ENCODE measurements at regions of chr14 and their contacts with region 1.

Region 1: DNA sequence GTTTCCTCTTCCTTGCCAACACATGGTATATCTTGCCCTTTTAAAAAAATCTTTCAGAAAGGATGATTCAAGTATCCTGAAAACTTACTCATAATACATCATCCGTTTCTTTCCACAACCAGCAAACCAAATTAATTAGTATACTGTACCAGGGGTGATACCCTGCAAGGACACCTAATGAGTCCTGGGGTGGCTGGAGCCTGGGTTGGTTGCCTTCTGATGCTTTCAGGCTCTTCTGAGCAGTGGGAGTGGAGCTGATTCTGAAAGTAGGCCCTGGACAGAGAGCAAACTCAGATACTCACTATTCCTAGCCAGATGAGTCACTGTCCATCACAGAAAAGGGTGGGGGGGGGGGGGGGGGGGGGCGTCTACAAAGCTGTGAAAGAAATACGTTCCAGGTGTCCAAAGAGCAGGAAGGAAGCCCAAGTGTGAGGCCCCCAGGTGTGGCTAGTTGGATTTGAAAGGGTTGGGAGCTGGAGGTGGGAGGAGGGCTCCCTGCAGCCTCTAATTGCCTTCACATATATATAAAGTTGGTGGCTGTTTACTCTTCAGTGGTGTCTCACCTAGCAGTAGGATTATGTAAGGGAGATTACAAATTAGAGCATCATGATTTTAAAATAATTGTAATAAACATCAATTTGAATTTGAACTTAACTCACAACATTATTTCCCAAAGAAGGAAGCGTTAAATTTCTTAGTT is 36.5 kb downstream of the FBXO33 start:
- DNase-seq: no peak
- ATAC-seq: no peak
- H3K4me3 Mint-ChIP-seq: no peak overlapping the region
- H3K27ac Mint-ChIP-seq: no peak overlapping the region
- H3K4me1 Mint-ChIP-seq: no peaks in the 10 kb centered on the region
- H3K27me3 Mint-ChIP-seq: no peaks in the 10 kb centered on the region
- CTCF ChIP-seq: no peak

Region 2: DNA sequence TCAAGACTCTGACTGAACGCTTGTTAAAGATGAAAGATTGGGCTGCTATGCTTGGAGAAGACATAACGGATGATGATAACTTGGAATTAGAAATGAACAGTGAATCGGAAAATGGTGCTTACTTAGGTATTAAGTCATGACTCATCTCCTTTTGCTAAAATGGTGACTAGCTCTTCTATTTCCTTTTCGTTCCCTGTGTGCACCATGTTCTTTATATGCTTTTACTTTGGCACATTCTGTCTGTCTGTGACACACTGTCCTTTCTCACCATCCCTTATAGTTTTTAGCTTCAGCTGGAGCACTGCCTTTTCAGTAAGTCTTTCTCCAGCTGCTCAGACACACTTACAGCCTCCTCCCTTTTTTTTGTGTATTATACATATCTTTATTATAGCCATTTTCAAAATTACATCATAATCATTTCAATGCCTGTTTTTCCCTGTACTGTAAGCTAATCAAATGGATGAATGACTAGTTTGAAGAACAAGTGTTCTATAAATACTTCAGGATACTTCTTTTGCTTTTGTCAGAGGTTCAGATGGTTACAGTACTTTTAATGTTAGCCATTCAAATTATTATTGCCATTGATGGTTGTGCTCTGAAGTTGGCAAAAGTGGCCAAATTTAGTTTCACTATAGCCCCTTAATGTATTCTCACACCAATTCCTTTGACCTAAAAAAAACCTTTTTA is 93.4 kb before region 1 on chr14:
- CTCF ChIA-PET with region 1: no interaction called
- POLR2A ChIA-PET with region 1: interaction called, 11 read pairs
- DNase-seq: no peak
- ATAC-seq: no peak
- H3K4me3 Mint-ChIP-seq: no peak overlapping the region
- H3K27ac Mint-ChIP-seq: no peak overlapping the region
- H3K4me1 Mint-ChIP-seq: no peaks in the 10 kb centered on the region
- H3K27me3 Mint-ChIP-seq: no peaks in the 10 kb centered on the region
- CTCF ChIP-seq: no peak

Region 3: GRCh38 chr14:39755269-39755878 is 359.7 kb after region 1 on chr14:
- CTCF ChIA-PET with region 1: no interaction called
- POLR2A ChIA-PET with region 1: no interaction called
- DNase-seq: no peak
- ATAC-seq: no peak
- H3K4me3 Mint-ChIP-seq: no peak overlapping the region
- H3K27ac Mint-ChIP-seq: no peak overlapping the region
- H3K4me1 Mint-ChIP-seq: peaks cover 4% of the 10 kb centered on the region
- H3K27me3 Mint-ChIP-seq: no peaks in the 10 kb centered on the region
- CTCF ChIP-seq: no peak

Measured in WTC11 (cell line).